Psoas muscle (tissue), 8 donors: ENCODE measurements at regions of chr11 and their contacts with region 1.

Region 1: DNA sequence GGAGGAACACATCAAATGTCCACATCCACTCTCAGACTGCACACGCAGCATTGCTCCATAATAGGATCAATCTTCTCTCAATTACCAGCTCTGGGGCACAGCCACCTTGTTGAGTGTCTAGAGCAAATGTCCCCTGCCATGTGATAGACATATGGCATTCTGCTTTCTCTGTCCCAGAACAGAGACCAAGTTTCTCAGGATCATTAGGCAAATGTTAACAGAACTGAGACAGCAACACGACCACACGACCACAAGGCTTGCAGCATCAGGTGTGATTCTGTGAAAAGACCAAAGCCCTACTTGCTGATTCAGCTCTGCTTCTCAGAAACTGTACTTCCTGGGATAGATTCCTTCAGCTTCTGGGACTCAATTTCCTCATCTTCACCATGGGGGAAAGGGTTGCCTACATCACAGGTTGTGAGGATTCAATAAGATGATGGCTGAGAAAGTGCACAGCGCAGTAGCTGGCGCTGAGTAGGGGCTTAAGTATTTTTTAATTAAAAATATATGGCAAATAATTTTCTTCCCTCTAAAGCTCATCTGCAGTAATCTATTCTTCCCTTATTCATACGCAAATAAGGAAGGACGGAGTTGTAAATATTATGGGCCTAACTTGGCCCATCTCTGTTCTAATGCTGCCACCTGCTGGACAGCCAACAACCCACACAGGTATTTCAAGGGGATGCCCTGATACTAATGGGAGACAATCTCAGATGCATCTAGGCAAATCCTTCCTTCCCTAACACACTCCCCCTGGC is 54.3 kb upstream of the USP47 start:
- DNase-seq: peak; percentile 65 to 84
- ATAC-seq: peak; percentile 88 to 96 (median 89)
- H3K4me3 ChIP-seq: no peak overlapping the region
- H3K27ac ChIP-seq: no peak overlapping the region
- H3K4me1 ChIP-seq: peaks cover 5% of the 10 kb centered on the region
- H3K27me3 ChIP-seq: no peaks in the 10 kb centered on the region
- CTCF ChIP-seq: peak; percentile 94

Region 2: DNA sequence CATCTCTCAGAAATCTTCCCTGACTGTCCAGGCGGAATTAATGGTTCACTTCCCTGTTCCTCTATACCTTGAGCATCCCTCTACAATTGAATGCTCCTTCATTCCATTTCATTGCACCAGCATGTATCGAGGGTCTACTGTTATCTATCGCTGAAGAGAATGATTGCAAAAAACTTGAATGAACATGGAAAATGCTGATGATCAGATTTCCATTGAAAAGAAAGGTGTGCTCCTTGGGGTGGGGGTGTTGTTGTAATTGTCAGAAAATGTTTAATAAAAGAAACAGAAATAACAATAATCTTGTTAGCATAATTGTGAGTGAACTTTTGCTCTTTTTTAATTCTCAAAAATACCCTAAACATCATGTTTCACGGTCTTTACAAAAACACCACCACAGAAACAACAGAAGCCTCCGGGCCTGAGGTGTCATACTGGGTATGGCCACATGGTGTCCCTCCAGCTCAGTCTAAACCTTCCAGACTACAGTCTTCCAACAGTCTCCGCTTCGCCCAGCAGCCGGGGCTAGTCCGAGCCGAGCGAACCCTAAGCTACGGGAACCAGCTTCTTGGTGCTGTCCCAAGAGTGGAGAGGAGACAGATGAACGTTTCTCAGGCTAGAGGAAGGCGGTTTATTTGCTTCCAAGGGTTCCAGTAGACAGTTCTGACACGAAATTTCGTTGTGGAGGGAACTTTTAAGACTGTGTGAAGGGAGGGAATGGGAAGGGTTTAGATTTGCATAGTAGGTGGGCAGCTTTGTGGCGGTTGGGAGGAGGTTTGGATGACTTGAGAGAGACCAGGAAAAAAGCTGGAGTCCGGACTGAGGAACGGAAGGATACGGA is 853.8 kb before region 1 on chr11:
- intact Hi-C with region 1: loop called (anchors 5 to 10 kb)
- DNase-seq: peak; percentile 89 to 94
- ATAC-seq: peak; percentile 87 to 91 (median 90)
- H3K4me3 ChIP-seq: peak overlapping the region; percentile 63
- H3K27ac ChIP-seq: peak overlapping the region; percentile 65
- H3K4me1 ChIP-seq: no peaks in the 10 kb centered on the region
- H3K27me3 ChIP-seq: no peaks in the 10 kb centered on the region
- CTCF ChIP-seq: peak; percentile 99

Region 3: GRCh38 chr11:11265994-11266606 is 521.4 kb before region 1 on chr11:
- intact Hi-C with region 1: loop called in 1 of 2 experiments (anchors 10 kb)
- DNase-seq: peak; percentile 40 to 76
- ATAC-seq: peak; percentile 69 to 92 (median 84)
- H3K4me3 ChIP-seq: no peak overlapping the region
- H3K27ac ChIP-seq: no peak overlapping the region
- H3K4me1 ChIP-seq: no peaks in the 10 kb centered on the region
- H3K27me3 ChIP-seq: no peaks in the 10 kb centered on the region
- CTCF ChIP-seq: peak; percentile 82

Region 4: GRCh38 chr11:11493698-11494097 is 293.8 kb before region 1 on chr11:
- intact Hi-C with region 1: loop called in 1 of 2 experiments (anchors 5 kb)
- DNase-seq: no peak
- ATAC-seq: no peak
- H3K4me3 ChIP-seq: no peak overlapping the region
- H3K27ac ChIP-seq: no peak overlapping the region
- H3K4me1 ChIP-seq: no peaks in the 10 kb centered on the region
- H3K27me3 ChIP-seq: no peaks in the 10 kb centered on the region
- CTCF ChIP-seq: peak; percentile 9

Region 5: DNA sequence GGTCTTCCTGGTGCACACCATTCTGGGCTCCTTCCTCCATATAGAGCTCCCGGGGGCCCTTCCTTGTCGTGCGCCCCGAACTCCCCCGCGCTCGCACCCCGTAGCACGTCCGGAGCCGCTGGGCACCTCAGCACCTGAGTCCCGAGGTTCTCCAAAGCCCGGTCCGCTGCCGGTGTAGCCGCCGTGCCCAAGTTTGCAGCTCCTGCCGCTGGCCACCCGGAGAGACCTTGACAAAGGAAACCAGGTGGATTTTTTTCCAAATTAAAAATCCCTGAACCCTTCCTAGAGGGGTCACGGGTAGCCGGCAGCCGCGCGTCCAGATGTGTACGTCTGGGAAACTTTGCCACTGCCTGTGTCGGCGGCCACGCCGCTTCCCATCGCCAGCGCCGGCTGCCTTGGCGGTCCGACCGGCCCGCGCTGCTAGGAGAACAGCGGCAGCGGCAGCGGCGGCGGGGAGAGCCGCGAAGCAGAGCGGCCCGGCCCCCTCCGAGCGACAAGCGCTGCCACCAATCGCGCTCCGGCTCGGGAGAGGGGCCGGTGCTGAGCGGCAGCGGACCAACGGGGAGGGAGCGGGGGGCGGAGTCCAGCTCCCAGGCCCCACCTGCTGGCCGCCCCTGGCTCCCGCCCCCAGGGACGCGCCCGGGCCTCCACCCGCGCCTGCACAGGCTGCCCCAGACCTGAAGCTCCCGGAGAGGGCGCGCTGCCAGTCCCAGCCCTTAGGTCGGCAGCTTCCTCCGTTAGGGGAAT is 165.7 kb before region 1 on chr11 and contains the start of gene GALNT18:
- intact Hi-C with region 1: loop called in 1 of 2 experiments (anchors 5 kb)
- DNase-seq: peak; percentile 94 to 96
- ATAC-seq: peak; percentile 95 to 98 (median 97)
- H3K4me3 ChIP-seq: peak within 1 kb of the TSS; percentile 69
- H3K27ac ChIP-seq: peak within 1 kb of the TSS; percentile 72
- H3K4me1 ChIP-seq: peaks cover 10% of the 10 kb centered on the region
- H3K27me3 ChIP-seq: no peaks in the 10 kb centered on the region
- CTCF ChIP-seq: peak; percentile 48
- total RNA-seq, gene GALNT18: 8.3 to 11.3 (median 9.0) TPM

Region 6: GRCh38 chr11:11813288-11813962 is 25.9 kb after region 1 on chr11:
- intact Hi-C with region 1: no loop called
- DNase-seq: peak in 1 of 2 donors; percentile 20
- ATAC-seq: peak; percentile 97 to 99 (median 98)
- H3K4me3 ChIP-seq: no peak overlapping the region
- H3K27ac ChIP-seq: peak overlapping the region; percentile 66
- H3K4me1 ChIP-seq: peaks cover 14% of the 10 kb centered on the region
- H3K27me3 ChIP-seq: no peaks in the 10 kb centered on the region
- CTCF ChIP-seq: no peak